ENCODE measurements at regions of chr19 and their contacts with region 1.

Region 1: DNA sequence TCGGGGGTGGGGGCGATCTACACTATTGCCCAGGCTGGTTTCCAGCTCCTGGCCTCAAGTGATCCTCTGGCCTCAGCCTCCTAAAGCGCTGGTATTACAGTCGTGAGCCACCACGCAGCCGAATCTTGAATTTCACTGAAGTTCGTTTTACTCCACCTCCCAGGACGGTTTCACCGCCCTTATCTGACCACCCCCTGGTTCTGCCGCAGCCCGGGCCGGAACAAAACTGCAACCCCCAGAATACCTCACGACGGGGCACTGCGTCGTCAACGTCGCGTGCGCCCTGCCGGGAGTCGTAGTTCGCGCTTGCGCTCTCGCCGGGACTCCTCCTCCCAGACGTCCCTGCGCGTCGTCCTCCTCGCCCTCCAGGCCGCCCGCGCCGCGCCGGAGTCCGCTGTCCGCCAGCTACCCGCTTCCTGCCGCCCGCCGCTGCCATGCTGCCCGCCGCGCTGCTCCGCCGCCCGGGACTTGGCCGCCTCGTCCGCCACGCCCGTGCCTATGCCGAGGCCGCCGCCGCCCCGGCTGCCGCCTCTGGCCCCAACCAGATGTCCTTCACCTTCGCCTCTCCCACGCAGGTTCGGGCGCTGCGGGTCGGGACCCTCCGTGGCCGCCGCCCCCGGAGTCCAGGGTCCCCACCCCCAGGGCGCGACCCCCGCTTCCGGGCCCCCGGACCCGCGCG is at the start of gene ATP5F1D:
- DNase-seq: peak; percentile 82 to 96 (median 92)
- ATAC-seq: peak; percentile 63
- H3K4me3 ChIP-seq: peak within 1 kb of the TSS; percentile 53
- H3K4me3 Mint-ChIP-seq: peak within 1 kb of the TSS; percentile 91
- H3K27ac ChIP-seq: peak within 1 kb of the TSS in 1 of 2 donors; percentile 25
- H3K27ac Mint-ChIP-seq: peak within 1 kb of the TSS; percentile 89
- H3K4me1 ChIP-seq: peaks cover 78% of the 10 kb centered on the region
- H3K4me1 Mint-ChIP-seq: peaks cover 31% of the 10 kb centered on the region
- H3K27me3 ChIP-seq: peaks cover 6% of the 10 kb centered on the region in 2 experiments
- H3K27me3 Mint-ChIP-seq: peaks cover 13% of the 10 kb centered on the region
- CTCF ChIP-seq: no peak
- total RNA-seq, gene ATP5F1D: 77.6 to 92.6 TPM

Region 2: DNA sequence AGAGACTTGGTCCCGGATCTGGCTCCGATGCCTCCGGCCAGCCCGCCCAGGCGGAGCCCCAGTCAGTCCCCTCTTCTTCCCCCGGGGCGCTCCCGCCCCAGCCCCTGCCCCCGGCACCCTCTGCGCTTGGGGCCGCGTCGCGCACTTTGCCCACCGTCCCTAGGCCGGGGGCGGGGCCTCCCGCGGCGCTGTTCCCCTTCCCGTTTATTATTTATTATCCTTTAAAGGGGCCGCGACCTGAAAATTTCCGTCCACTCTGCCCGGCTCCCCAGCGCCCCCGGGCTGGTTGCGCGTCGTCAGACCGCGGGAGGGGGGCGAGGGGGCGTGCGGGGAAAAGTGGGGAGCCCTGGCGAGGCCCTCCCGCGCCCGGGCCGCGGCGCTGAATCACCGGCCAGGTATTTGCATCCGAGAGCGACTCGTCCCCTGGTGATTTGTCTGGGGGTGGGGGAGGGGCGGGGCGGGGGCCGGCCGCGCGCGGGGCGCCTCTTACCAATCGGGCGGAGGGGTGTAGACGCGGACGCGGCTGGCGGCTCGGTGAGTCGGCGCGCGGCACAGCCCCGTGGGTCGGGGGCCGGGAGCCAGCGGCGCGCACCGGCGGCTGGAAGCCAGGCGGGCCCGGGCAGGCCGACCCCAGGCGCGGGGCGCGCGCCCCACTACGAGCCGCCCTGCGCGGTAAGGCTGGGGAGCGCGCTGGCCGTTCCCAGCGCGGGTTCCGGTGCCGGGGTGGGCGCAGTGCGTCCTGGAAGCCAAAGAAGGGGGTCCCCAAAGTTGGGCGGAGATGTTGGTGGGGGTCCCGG is 315.8 kb before region 1 on chr19 and contains the start of gene ARID3A:
- CTCF ChIA-PET with region 1: interaction called, 3 read pairs
- POLR2A ChIA-PET with region 1: no interaction called
- intact Hi-C with region 1: loop called (anchors 1 kb)
- DNase-seq: peak; percentile 55 to 87 (median 72)
- ATAC-seq: peak; percentile 66
- H3K4me3 ChIP-seq: peak within 1 kb of the TSS; percentile 83
- H3K4me3 Mint-ChIP-seq: peak within 1 kb of the TSS; percentile 86
- H3K27ac ChIP-seq: peak within 1 kb of the TSS in 1 of 2 donors; percentile 60
- H3K27ac Mint-ChIP-seq: peak within 1 kb of the TSS; percentile 36
- H3K4me1 ChIP-seq: peaks cover 44% of the 10 kb centered on the region
- H3K4me1 Mint-ChIP-seq: peaks cover 15% of the 10 kb centered on the region
- H3K27me3 ChIP-seq: no peaks in the 10 kb centered on the region
- H3K27me3 Mint-ChIP-seq: no peaks in the 10 kb centered on the region
- CTCF ChIP-seq: no peak
- total RNA-seq, gene ARID3A: 3.7 to 4.1 TPM

Region 3: GRCh38 chr19:1113033-1113985 is 128.2 kb before region 1 on chr19:
- CTCF ChIA-PET with region 1: interaction called, 9 read pairs
- POLR2A ChIA-PET with region 1: interaction called, 4 read pairs
- intact Hi-C with region 1: loop called (anchors 1 kb)
- DNase-seq: peak; percentile 73 to 94 (median 80)
- ATAC-seq: peak; percentile 87
- H3K4me3 ChIP-seq: no peak overlapping the region
- H3K4me3 Mint-ChIP-seq: no peak overlapping the region
- H3K27ac ChIP-seq: peak overlapping the region; percentile 21 to 22
- H3K27ac Mint-ChIP-seq: peak overlapping the region; percentile 30
- H3K4me1 ChIP-seq: peaks cover 16% of the 10 kb centered on the region
- H3K4me1 Mint-ChIP-seq: no peaks in the 10 kb centered on the region
- H3K27me3 ChIP-seq: no peaks in the 10 kb centered on the region
- H3K27me3 Mint-ChIP-seq: no peaks in the 10 kb centered on the region
- CTCF ChIP-seq: peak; percentile 85

Region 4: DNA sequence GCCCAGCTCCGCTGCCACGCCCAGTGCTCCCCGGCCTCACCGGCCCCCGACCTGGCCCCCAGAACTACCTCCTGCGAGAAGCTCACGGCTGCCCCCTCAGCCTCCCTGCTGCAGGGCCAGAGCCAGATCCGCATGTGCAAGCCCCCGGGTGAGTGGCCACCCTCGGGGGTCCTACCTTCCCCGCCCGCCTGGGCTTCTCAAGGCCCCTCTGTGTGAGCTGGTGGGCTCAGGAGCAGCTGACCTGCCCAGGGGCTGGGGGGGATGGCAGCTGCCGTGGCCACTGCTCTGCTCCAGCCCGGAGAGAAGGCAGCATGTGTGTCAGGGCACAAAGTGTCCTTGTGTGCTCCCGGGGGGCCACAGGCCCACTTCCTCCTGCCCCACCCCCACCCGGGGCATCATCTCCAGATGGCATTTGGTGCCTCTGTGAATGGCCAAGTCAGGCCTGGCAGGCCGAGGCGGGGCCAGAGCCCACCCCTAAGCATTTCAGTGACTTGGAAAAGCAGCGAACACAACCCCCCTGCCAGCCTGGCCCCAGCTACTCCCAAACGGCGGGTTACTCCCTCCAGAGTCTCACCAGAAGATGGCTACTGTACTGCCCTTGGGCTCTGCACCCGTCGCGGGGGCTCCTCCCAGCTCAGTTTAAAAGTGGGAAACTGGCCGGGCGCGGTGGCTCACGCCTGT is 14.1 kb after region 1 on chr19:
- CTCF ChIA-PET with region 1: interaction called, 255 read pairs
- POLR2A ChIA-PET with region 1: interaction called, 26 read pairs
- intact Hi-C with region 1: no loop called
- DNase-seq: no peak
- ATAC-seq: no peak
- H3K4me3 ChIP-seq: no peak overlapping the region
- H3K4me3 Mint-ChIP-seq: no peak overlapping the region
- H3K27ac ChIP-seq: no peak overlapping the region
- H3K27ac Mint-ChIP-seq: no peak overlapping the region
- H3K4me1 ChIP-seq: peaks cover 95% of the 10 kb centered on the region
- H3K4me1 Mint-ChIP-seq: peaks cover 39% of the 10 kb centered on the region
- H3K27me3 ChIP-seq: no peaks in the 10 kb centered on the region
- H3K27me3 Mint-ChIP-seq: no peaks in the 10 kb centered on the region
- CTCF ChIP-seq: no peak

Region 5: DNA sequence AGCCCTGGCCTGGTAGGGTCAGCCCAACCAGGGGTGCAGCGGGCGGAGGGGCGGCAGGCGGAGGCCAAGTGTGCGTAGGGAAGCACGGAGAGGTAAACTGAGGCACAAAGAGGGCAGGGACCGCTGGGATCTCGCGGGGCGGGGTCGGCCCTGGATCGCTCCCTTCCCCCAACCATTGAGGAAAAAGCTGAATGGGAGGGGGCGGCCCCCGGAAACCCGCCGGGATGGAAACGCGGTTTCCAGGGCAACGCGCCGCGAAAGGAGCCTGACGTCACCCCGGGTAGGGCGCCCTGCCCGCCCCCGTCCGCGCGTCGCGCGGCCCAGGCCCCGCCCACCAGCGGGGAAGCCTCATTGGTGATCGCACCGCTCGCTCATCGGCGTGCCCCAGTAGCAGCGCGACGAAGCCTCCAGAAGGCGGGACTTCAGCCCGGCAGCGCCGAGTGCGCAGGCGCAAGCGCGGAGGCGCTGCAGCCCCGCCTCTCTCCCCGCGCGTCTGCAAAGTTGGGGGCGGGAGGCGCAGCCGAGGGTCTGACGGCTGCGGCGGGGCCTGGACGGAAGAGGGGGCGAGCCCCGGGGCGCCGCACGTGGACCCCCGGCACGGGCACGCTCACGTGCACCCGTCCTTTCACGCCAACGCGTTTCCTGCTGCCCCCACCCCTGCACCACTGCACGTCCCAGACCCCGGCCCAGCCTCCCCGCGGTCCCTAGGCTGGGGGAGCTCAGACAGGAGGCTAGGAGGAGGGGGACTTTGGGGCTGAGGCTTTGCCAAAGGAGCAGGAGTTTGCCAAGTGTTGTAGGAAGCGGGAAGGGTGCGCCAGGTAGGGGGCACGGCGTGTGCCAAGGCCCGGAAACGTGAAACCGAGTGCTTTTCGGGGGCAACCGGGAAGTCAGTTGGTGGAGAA is 19.3 kb after region 1 on chr19:
- CTCF ChIA-PET with region 1: interaction called, 255 read pairs
- POLR2A ChIA-PET with region 1: interaction called, 476 read pairs
- intact Hi-C with region 1: loop called in 1 of 2 experiments (anchors 1 kb)
- DNase-seq: peak; percentile 94 to 99 (median 98)
- ATAC-seq: peak; percentile 79
- H3K4me3 ChIP-seq: peak overlapping the region; percentile 78
- H3K4me3 Mint-ChIP-seq: peak overlapping the region; percentile 92
- H3K27ac ChIP-seq: peak overlapping the region; percentile 98 to 99
- H3K27ac Mint-ChIP-seq: peak overlapping the region; percentile 95
- H3K4me1 ChIP-seq: peaks cover 84% of the 10 kb centered on the region
- H3K4me1 Mint-ChIP-seq: peaks cover 46% of the 10 kb centered on the region
- H3K27me3 ChIP-seq: no peaks in the 10 kb centered on the region
- H3K27me3 Mint-ChIP-seq: no peaks in the 10 kb centered on the region
- CTCF ChIP-seq: no peak

Region 6: DNA sequence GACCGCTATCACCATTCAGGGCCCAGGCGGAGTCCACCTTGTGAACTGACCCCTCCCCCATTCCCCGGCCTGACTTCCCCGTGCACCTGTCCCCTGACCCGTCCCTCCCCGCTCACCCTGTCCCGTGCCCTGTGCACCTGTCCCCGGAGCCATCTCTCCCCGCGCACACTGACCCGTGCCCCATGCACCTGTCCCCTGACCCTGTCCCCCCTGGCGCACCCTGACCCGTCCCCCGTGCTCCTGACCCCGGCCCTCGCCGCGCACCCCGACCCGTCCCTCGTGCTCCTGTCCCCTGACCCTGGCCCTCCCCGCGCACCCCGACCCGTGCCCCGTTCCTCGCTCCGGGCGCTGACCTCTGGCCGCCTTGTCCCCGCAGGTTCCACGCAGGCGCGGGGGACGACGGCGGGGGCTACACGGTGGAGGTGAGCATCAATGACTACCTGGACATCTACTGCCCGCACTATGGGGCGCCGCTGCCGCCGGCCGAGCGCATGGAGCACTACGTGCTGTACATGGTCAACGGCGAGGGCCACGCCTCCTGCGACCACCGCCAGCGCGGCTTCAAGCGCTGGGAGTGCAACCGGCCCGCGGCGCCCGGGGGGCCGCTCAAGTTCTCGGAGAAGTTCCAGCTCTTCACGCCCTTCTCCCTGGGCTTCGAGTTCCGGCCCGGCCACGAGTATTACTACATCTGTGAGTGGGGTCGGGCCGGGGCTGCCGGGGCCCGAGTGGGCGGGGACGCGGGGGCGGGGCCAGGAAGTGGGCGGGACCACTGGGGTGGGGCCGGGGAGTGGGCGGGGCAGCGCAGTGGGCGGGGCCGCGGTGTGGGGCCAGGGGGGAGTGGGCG is 53.8 kb after region 1 on chr19:
- CTCF ChIA-PET with region 1: no interaction called
- POLR2A ChIA-PET with region 1: no interaction called
- intact Hi-C with region 1: no loop called
- DNase-seq: peak in 7 of 14 experiments; percentile 35 to 66 (median 39)
- ATAC-seq: peak; percentile 70
- H3K4me3 ChIP-seq: no peak overlapping the region
- H3K4me3 Mint-ChIP-seq: no peak overlapping the region
- H3K27ac ChIP-seq: no peak overlapping the region
- H3K27ac Mint-ChIP-seq: no peak overlapping the region
- H3K4me1 ChIP-seq: peaks cover 15% of the 10 kb centered on the region
- H3K4me1 Mint-ChIP-seq: no peaks in the 10 kb centered on the region
- H3K27me3 ChIP-seq: peaks cover 35 to 38% of the 10 kb centered on the region in 2 experiments
- H3K27me3 Mint-ChIP-seq: peaks cover 33% of the 10 kb centered on the region
- CTCF ChIP-seq: no peak

Region 7: GRCh38 chr19:1373534-1374249 is 132.1 kb after region 1 on chr19:
- CTCF ChIA-PET with region 1: interaction called, 11 read pairs
- POLR2A ChIA-PET with region 1: no interaction called
- intact Hi-C with region 1: no loop called
- DNase-seq: no peak
- ATAC-seq: no peak
- H3K4me3 ChIP-seq: no peak overlapping the region
- H3K4me3 Mint-ChIP-seq: no peak overlapping the region
- H3K27ac ChIP-seq: no peak overlapping the region
- H3K27ac Mint-ChIP-seq: no peak overlapping the region
- H3K4me1 ChIP-seq: no peaks in the 10 kb centered on the region
- H3K4me1 Mint-ChIP-seq: no peaks in the 10 kb centered on the region
- H3K27me3 ChIP-seq: no peaks in the 10 kb centered on the region
- H3K27me3 Mint-ChIP-seq: no peaks in the 10 kb centered on the region
- CTCF ChIP-seq: no peak